PC-3 (cell line): ENCODE measurements at regions of chr11 and their contacts with region 1.

Region 1: GRCh38 chr11:120210626-120211521 is at the start of gene OAF:
- DNase-seq: peak; percentile 89
- ATAC-seq: peak; percentile 69
- H3K4me3 ChIP-seq: peak within 1 kb of the TSS; percentile 77
- H3K27ac ChIP-seq: peak within 1 kb of the TSS; percentile 78
- H3K4me1 ChIP-seq: peaks cover 59% of the 10 kb centered on the region
- H3K27me3 ChIP-seq: no peaks in the 10 kb centered on the region
- CTCF ChIP-seq: peak; percentile 11; the same call in 1 of the 2 replicates
- total RNA-seq, gene OAF: 97.1 and 126 TPM in 2 replicates

Region 2: GRCh38 chr11:120108154-120108865 is 102.6 kb before region 1 on chr11:
- CTCF ChIA-PET with region 1: no interaction called
- POLR2A ChIA-PET with region 1: no interaction called
- intact Hi-C with region 1: no loop called
- DNase-seq: peak; percentile 80
- ATAC-seq: peak; percentile 92
- H3K4me3 ChIP-seq: no peak overlapping the region
- H3K27ac ChIP-seq: no peak overlapping the region
- H3K4me1 ChIP-seq: no peaks in the 10 kb centered on the region
- H3K27me3 ChIP-seq: peaks cover 42% of the 10 kb centered on the region
- CTCF ChIP-seq: peak; percentile 99

Region 3: GRCh38 chr11:120128782-120129172 is 82.1 kb before region 1 on chr11:
- CTCF ChIA-PET with region 1: no interaction called
- POLR2A ChIA-PET with region 1: interaction called, 7 read pairs
- intact Hi-C with region 1: loop called (anchors 2 kb)
- DNase-seq: peak; percentile 90
- ATAC-seq: peak; percentile 91
- H3K4me3 ChIP-seq: peak overlapping the region; percentile 23; the same call in 1 of the 2 replicates
- H3K27ac ChIP-seq: peak overlapping the region; percentile 90
- H3K4me1 ChIP-seq: peaks cover 35% of the 10 kb centered on the region
- H3K27me3 ChIP-seq: no peaks in the 10 kb centered on the region
- CTCF ChIP-seq: no peak

Region 4: GRCh38 chr11:120172054-120172911 is 38.6 kb before region 1 on chr11:
- CTCF ChIA-PET with region 1: interaction called, 3 read pairs
- POLR2A ChIA-PET with region 1: no interaction called
- intact Hi-C with region 1: loop called (anchors 5 kb)
- DNase-seq: peak; percentile 81
- ATAC-seq: peak; percentile 78
- H3K4me3 ChIP-seq: no peak overlapping the region
- H3K27ac ChIP-seq: no peak overlapping the region
- H3K4me1 ChIP-seq: peaks cover 8% of the 10 kb centered on the region
- H3K27me3 ChIP-seq: peaks cover 39% of the 10 kb centered on the region
- CTCF ChIP-seq: peak; percentile 91

Region 5: GRCh38 chr11:120182790-120183491 is 27.9 kb before region 1 on chr11:
- CTCF ChIA-PET with region 1: no interaction called
- POLR2A ChIA-PET with region 1: no interaction called
- intact Hi-C with region 1: loop called (anchors 2 kb)
- DNase-seq: peak; percentile 47
- ATAC-seq: peak; percentile 79
- H3K4me3 ChIP-seq: no peak overlapping the region
- H3K27ac ChIP-seq: no peak overlapping the region
- H3K4me1 ChIP-seq: peaks cover 18% of the 10 kb centered on the region; the same call in 1 of the 2 replicates
- H3K27me3 ChIP-seq: no peaks in the 10 kb centered on the region
- CTCF ChIP-seq: peak; percentile 69

Region 6: GRCh38 chr11:120235024-120235861 is 24.4 kb after region 1 on chr11:
- CTCF ChIA-PET with region 1: no interaction called
- POLR2A ChIA-PET with region 1: no interaction called
- intact Hi-C with region 1: no loop called
- DNase-seq: peak; percentile 88
- ATAC-seq: peak; percentile 86
- H3K4me3 ChIP-seq: no peak overlapping the region
- H3K27ac ChIP-seq: no peak overlapping the region
- H3K4me1 ChIP-seq: peaks cover 5% of the 10 kb centered on the region; the same call in 1 of the 2 replicates
- H3K27me3 ChIP-seq: peaks cover 16% of the 10 kb centered on the region
- CTCF ChIP-seq: peak; percentile 98

Region 7: GRCh38 chr11:120272303-120272702 is 61.4 kb after region 1 on chr11:
- CTCF ChIA-PET with region 1: no interaction called
- POLR2A ChIA-PET with region 1: no interaction called
- intact Hi-C with region 1: no loop called
- DNase-seq: peak; percentile 87
- ATAC-seq: peak; percentile 99
- H3K4me3 ChIP-seq: no peak overlapping the region
- H3K27ac ChIP-seq: peak overlapping the region; percentile 27
- H3K4me1 ChIP-seq: peaks cover 10% of the 10 kb centered on the region
- H3K27me3 ChIP-seq: peaks cover 18% of the 10 kb centered on the region
- CTCF ChIP-seq: no peak